ENCODE measurements at regions of chr18 and their contacts with region 1.

Region 1: DNA sequence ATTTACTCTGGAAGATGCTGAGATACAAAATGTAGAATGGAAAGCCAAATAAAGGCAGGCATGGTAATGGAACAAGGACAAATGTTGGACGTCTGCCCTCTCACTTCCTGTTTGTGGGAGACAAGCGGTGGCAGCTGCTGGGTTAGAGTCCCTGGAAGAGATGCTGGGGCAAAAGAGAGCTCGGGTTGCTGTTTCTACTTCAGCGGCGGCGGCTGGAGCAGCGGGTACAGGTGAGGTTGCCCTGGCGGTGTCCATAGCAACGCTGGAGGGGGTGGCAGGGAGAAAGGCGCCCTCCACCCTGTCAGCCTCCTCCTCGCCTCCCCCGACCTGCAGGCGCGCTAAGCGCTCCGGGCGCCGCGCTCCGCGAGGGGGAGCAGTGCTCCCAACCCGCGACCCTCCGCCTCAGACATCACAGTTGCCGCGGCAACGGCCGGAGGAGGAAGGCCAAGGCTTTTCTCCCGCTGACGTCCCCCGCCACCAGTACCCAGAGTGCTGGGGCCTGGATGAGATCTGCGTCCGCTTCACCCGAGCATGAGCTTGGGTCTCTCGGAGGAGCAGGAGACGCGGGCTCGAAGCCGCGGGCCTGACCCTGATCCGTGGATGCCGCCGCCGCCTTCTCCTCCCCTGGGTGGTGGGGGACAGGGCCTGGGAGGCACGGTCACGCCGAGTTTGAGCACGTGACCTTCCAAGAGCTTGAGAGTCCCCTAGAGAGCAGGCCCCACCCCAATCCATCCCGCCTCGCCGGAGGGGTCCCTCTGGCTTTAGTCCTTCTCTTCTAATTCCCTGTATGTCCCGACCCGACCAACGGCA is 65.6 kb downstream of the NOL4 start:
- DNase-seq: peak; percentile 42 to 93 (median 82)

Region 2: GRCh38 chr18:34031814-34032213 is 127.3 kb before region 1 on chr18:
- intact Hi-C with region 1: no loop called
- DNase-seq: no peak

Region 3: GRCh38 chr18:34222307-34223163 is 63.4 kb after region 1 on chr18:
- intact Hi-C with region 1: loop called (anchors 2 kb)
- DNase-seq: peak in 41 of 42 donors; percentile 24 to 79 (median 55)

Measured in head of caudate nucleus (tissue), 42 donors.